Sigmoid colon (tissue), 7 donors: ENCODE measurements at regions of chr2 and their contacts with region 1.

Region 1: GRCh38 chr2:231411831-231412617 is 16.5 kb downstream of the B3GNT7 start:
- DNase-seq: peak; percentile 94
- H3K4me3 ChIP-seq: peak overlapping the region; percentile 58 to 76 (median 72)
- H3K27ac ChIP-seq: peak overlapping the region in 3 of 4 donors; percentile 39 to 72 (median 70)
- H3K4me1 ChIP-seq: peaks cover 0 to 15% (median 13%) of the 10 kb centered on the region in 4 donors
- H3K27me3 ChIP-seq: no peaks in the 10 kb centered on the region
- CTCF ChIP-seq: peak; percentile 72 to 95 (median 82)
- EP300 ChIP-seq: no peak
- POLR2A ChIP-seq: no peak

Region 2: DNA sequence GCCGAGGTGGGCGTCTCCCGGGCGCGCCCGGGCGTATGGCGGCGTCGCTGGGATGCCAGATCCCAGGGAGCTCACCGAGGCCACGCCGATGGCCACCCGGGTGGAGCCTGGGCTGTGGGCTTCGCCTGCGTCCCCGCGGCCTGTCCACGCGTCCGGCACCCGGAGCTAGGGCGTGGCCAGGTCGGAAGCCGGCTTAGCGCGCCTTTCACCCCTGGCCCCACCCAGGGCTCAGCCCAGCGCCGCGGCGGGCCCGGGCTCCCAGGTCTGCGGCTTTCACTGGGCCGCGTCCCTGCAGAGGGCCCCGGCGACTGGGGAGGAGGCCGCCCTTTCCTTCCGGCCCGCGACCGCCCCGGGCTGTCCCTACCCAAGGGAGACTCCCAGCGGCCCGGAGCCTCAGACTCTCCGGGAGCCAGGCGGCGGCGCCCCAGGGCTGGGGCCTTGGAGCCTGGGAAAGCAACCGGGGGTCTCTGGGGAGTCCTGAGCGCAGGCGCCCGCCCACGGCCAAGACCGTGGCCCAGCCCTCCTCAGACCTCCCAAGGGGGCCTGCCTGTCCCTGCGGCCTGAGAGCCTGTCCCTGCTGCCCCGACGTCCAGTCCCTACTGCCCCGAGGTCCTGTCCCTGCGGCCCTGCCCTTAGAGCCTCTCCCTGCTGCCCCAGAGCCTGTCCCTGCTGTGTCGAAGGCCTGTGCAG is 583.6 kb before region 1 on chr2:
- intact Hi-C with region 1: no loop called
- DNase-seq: no peak
- H3K4me3 ChIP-seq: peak overlapping the region in 3 of 4 donors; percentile 4 to 46 (median 41)
- H3K27ac ChIP-seq: no peak overlapping the region
- H3K4me1 ChIP-seq: peaks cover 0 to 17% (median 12%) of the 10 kb centered on the region in 4 donors
- H3K27me3 ChIP-seq: peaks cover 5 to 38% (median 25%) of the 10 kb centered on the region in 3 donors
- CTCF ChIP-seq: no peak
- EP300 ChIP-seq: no peak
- POLR2A ChIP-seq: no peak

Region 3: DNA sequence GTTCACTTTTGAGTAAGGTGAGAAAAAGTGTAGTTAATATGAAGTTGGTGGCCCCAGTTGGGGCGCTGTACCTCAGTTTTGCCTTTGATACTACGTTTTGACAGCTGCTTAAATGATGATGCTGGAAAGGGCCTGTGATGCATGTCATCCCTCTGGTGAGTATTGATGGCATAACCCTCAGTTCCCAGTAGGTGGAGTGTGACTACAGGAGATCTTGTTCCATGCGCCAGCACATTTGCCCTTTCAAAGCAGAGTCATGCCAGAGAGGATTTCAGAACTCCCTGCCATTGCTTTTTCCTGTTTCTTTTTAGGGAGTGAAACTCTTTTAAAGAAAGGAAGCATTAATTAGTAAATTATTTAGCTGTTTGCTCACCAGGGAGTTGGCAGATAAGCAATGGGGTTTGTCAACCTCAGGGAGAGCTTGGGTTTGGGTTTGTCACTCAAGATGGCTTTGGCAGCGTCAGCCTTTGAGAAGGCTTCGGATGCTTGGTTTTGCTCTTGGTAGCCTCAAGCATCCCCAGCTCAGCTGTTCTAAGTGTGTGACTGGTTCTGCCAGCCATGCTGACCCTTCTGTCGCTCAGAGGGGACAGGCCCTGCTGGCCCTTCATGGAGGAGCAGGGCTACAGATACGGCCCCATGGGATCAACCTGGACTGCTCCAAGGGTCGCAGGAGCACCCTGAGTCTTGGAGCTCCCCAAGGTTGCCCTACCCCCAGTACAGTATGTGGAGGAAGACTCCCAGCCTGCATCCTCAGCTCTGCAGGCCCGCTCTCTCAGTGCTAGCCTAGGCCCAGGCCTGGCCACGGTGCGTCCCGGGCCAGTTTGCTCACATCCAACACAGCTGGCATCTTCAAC is 184.5 kb before region 1 on chr2:
- intact Hi-C with region 1: loop called (anchors 1 kb)
- DNase-seq: peak; percentile 88
- H3K4me3 ChIP-seq: no peak overlapping the region
- H3K27ac ChIP-seq: peak overlapping the region; percentile 69 to 89 (median 82)
- H3K4me1 ChIP-seq: peaks cover 0 to 64% (median 49%) of the 10 kb centered on the region in 4 donors
- H3K27me3 ChIP-seq: no peaks in the 10 kb centered on the region
- CTCF ChIP-seq: peak; percentile 75 to 93 (median 84)
- EP300 ChIP-seq: no peak
- POLR2A ChIP-seq: no peak

Region 4: GRCh38 chr2:231297108-231297908 is 114.7 kb before region 1 on chr2:
- intact Hi-C with region 1: loop called (anchors 2 kb)
- DNase-seq: peak; percentile 76
- H3K4me3 ChIP-seq: no peak overlapping the region
- H3K27ac ChIP-seq: no peak overlapping the region
- H3K4me1 ChIP-seq: no peaks in the 10 kb centered on the region
- H3K27me3 ChIP-seq: no peaks in the 10 kb centered on the region
- CTCF ChIP-seq: peak in 3 of 4 experiments; percentile 62 to 68 (median 65)
- EP300 ChIP-seq: no peak
- POLR2A ChIP-seq: no peak

Region 5: GRCh38 chr2:231583982-231584381 is 172.0 kb after region 1 on chr2:
- intact Hi-C with region 1: no loop called
- DNase-seq: no peak
- H3K4me3 ChIP-seq: no peak overlapping the region
- H3K27ac ChIP-seq: no peak overlapping the region
- H3K4me1 ChIP-seq: no peaks in the 10 kb centered on the region
- H3K27me3 ChIP-seq: no peaks in the 10 kb centered on the region
- CTCF ChIP-seq: no peak
- EP300 ChIP-seq: no peak
- POLR2A ChIP-seq: no peak

Region 6: GRCh38 chr2:232960862-232961261 is 1548.8 kb after region 1 on chr2:
- intact Hi-C with region 1: no loop called
- DNase-seq: no peak
- H3K4me3 ChIP-seq: no peak overlapping the region
- H3K27ac ChIP-seq: no peak overlapping the region
- H3K4me1 ChIP-seq: no peaks in the 10 kb centered on the region
- H3K27me3 ChIP-seq: no peaks in the 10 kb centered on the region
- CTCF ChIP-seq: no peak
- EP300 ChIP-seq: no peak
- POLR2A ChIP-seq: no peak